B cell (primary cell): ENCODE measurements at regions of chr17 and their contacts with region 1.

Region 1: GRCh38 chr17:41786227-41787020 is at the start of gene JUP:
- DNase-seq: peak; percentile 97
- ATAC-seq: peak; percentile 90
- H3K4me3 ChIP-seq: peak within 1 kb of the TSS; percentile 53 to 76 (median 68)
- H3K4me3 Mint-ChIP-seq: peak within 1 kb of the TSS; percentile 88
- H3K27ac ChIP-seq: peak within 1 kb of the TSS; percentile 64 to 72
- H3K27ac Mint-ChIP-seq: peak within 1 kb of the TSS; percentile 86
- H3K4me1 ChIP-seq: peaks cover 33 to 52% of the 10 kb centered on the region in 2 donors
- H3K4me1 Mint-ChIP-seq: peaks cover 45% of the 10 kb centered on the region
- H3K27me3 ChIP-seq: no peaks in the 10 kb centered on the region
- H3K27me3 Mint-ChIP-seq: no peaks in the 10 kb centered on the region
- CTCF ChIP-seq: peak; percentile 78
- total RNA-seq, gene JUP: 56.1 and 63.3 TPM in 2 replicates

Region 2: DNA sequence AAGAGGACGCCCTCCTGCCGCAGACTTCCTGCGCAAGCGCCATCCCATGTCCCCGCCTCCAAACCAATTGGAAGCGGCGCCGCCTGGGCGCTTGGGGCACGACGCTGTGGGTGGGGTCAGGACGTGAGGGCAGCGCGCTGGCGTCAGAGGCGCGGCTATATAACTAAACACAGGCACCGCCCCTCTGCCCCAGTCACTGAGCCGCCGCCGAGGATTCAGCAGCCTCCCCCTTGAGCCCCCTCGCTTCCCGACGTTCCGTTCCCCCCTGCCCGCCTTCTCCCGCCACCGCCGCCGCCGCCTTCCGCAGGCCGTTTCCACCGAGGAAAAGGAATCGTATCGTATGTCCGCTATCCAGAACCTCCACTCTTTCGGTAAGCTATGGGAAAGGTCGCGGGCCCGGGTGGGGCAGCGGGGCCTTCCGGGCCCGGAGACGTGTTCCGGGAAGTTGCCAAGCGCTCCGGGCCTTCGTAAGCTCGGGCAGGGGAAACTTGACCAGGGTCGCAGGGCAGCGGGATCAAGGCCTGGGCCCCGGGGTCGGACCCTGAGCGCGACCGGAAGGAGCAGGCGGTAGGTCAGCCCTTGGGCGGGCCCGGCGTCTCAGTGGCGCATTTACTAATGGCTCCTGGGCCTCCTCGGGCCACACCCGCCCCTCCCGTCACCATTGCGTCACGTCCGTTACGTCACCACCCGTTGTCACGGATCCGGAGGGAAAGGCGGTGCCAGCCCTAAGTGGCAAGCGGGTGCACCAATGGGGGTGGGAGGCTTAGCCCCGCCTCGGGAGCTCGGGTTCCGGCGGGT is 97.5 kb before region 1 on chr17 and contains the start of gene EIF1:
- CTCF ChIA-PET with region 1: interaction called, 6 read pairs
- POLR2A ChIA-PET with region 1: interaction called, 14 read pairs
- intact Hi-C with region 1: loop called (anchors 5 kb)
- DNase-seq: peak; percentile 100
- ATAC-seq: peak; percentile 75
- H3K4me3 ChIP-seq: peak within 1 kb of the TSS; percentile 81 to 99 (median 87)
- H3K4me3 Mint-ChIP-seq: peak within 1 kb of the TSS; percentile 96
- H3K27ac ChIP-seq: peak within 1 kb of the TSS; percentile 99
- H3K27ac Mint-ChIP-seq: peak within 1 kb of the TSS; percentile 100
- H3K4me1 ChIP-seq: peaks cover 22 to 27% of the 10 kb centered on the region in 2 donors
- H3K4me1 Mint-ChIP-seq: peaks cover 38% of the 10 kb centered on the region
- H3K27me3 ChIP-seq: no peaks in the 10 kb centered on the region
- H3K27me3 Mint-ChIP-seq: no peaks in the 10 kb centered on the region
- CTCF ChIP-seq: no peak
- total RNA-seq, gene EIF1: 753 and 773 TPM in 2 replicates

Region 3: DNA sequence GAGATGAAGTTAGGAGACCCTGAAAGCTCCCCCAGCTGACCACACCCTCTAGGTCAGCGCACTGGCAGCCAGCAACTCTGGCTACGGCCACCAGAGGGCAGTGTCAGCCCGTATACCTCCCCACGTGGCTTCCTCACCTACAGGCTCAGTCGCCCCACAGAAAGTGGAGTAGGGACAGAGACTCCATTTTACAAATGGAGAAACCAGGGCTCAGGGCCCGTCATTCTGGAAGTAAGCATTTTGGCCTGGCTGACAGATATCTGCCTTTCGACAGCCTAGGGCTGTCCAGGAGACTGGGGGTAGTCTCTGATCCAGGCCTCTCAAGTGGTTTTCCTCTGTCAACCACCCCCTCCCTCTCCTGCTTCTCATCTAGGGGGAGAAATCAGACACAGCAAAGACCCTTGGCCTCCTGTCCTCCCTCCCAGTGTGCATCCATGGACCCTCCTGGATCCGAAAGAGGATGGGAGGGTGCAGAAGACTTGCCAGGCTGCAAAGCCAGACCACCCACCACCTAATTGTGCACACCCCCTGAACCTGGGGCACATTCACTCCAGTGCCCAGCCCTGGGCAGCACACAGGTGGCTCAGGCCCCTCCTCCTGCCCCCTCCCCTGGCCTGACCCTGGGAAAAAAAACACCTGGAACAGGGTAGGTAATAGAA is 48.2 kb before region 1 on chr17:
- CTCF ChIA-PET with region 1: interaction called, 15 read pairs
- POLR2A ChIA-PET with region 1: interaction called, 3 read pairs
- intact Hi-C with region 1: loop called (anchors 5 kb)
- DNase-seq: peak; percentile 88
- ATAC-seq: peak; percentile 90
- H3K4me3 ChIP-seq: no peak overlapping the region
- H3K4me3 Mint-ChIP-seq: no peak overlapping the region
- H3K27ac ChIP-seq: no peak overlapping the region
- H3K27ac Mint-ChIP-seq: no peak overlapping the region
- H3K4me1 ChIP-seq: peaks cover 23 to 25% of the 10 kb centered on the region in 2 donors
- H3K4me1 Mint-ChIP-seq: peaks cover 11% of the 10 kb centered on the region
- H3K27me3 ChIP-seq: peaks cover 0 to 42% (median 27%) of the 10 kb centered on the region in 4 experiments
- H3K27me3 Mint-ChIP-seq: peaks cover 28% of the 10 kb centered on the region
- CTCF ChIP-seq: peak; percentile 99

Region 4: DNA sequence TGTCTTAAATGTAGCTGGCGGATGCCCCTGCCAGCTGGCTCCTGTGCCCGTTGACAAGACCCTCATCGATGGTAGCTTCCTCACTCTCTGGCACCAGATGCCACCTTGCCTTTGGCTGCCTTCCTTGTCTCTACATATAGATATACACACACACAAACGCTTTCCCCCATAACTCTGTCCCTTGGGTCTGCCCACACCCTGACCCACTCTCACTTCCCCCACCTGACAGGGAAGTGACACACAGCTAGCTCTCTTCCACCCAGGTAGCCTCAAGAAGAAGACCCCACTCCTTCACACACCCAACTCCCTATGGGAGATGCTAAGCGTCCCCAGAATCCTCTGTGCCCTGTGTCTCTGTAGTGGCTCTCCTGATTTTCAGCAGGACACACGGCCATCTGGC is 25.5 kb before region 1 on chr17:
- CTCF ChIA-PET with region 1: interaction called, 10 read pairs
- POLR2A ChIA-PET with region 1: no interaction called
- intact Hi-C with region 1: no loop called
- DNase-seq: peak; percentile 64
- ATAC-seq: peak; percentile 88
- H3K4me3 ChIP-seq: no peak overlapping the region
- H3K4me3 Mint-ChIP-seq: peak overlapping the region; percentile 18
- H3K27ac ChIP-seq: peak overlapping the region in 1 of 2 donors; percentile 47
- H3K27ac Mint-ChIP-seq: peak overlapping the region; percentile 82
- H3K4me1 ChIP-seq: peaks cover 4 to 16% of the 10 kb centered on the region in 2 donors
- H3K4me1 Mint-ChIP-seq: peaks cover 18% of the 10 kb centered on the region
- H3K27me3 ChIP-seq: no peaks in the 10 kb centered on the region
- H3K27me3 Mint-ChIP-seq: no peaks in the 10 kb centered on the region
- CTCF ChIP-seq: no peak

Region 5: GRCh38 chr17:41801374-41802271 is 15.2 kb after region 1 on chr17:
- CTCF ChIA-PET with region 1: interaction called, 63 read pairs
- POLR2A ChIA-PET with region 1: interaction called, 13 read pairs
- intact Hi-C with region 1: loop called (anchors 1 kb)
- DNase-seq: peak; percentile 84
- ATAC-seq: peak; percentile 86
- H3K4me3 ChIP-seq: no peak overlapping the region
- H3K4me3 Mint-ChIP-seq: no peak overlapping the region
- H3K27ac ChIP-seq: no peak overlapping the region
- H3K27ac Mint-ChIP-seq: peak overlapping the region; percentile 5
- H3K4me1 ChIP-seq: peaks cover 7 to 22% of the 10 kb centered on the region in 2 donors
- H3K4me1 Mint-ChIP-seq: peaks cover 16% of the 10 kb centered on the region
- H3K27me3 ChIP-seq: no peaks in the 10 kb centered on the region
- H3K27me3 Mint-ChIP-seq: no peaks in the 10 kb centered on the region
- CTCF ChIP-seq: peak; percentile 99

Region 6: GRCh38 chr17:41811549-41812380 is 25.3 kb after region 1 on chr17 and contains the start of gene P3H4:
- CTCF ChIA-PET with region 1: interaction called, 25 read pairs
- POLR2A ChIA-PET with region 1: no interaction called
- intact Hi-C with region 1: loop called (anchors 1 kb)
- DNase-seq: peak; percentile 88
- ATAC-seq: peak; percentile 91
- H3K4me3 ChIP-seq: peak within 1 kb of the TSS; percentile 23 to 85 (median 60)
- H3K4me3 Mint-ChIP-seq: peak within 1 kb of the TSS; percentile 96
- H3K27ac ChIP-seq: no peak within 1 kb of the TSS
- H3K27ac Mint-ChIP-seq: peak within 1 kb of the TSS; percentile 83
- H3K4me1 ChIP-seq: peaks cover 20% of the 10 kb centered on the region in 2 donors
- H3K4me1 Mint-ChIP-seq: peaks cover 19% of the 10 kb centered on the region
- H3K27me3 ChIP-seq: peaks cover 0 to 25% (median 5%) of the 10 kb centered on the region in 4 experiments
- H3K27me3 Mint-ChIP-seq: peaks cover 6% of the 10 kb centered on the region
- CTCF ChIP-seq: peak; percentile 82
- total RNA-seq, gene P3H4: 2.5 and 2.8 TPM in 2 replicates

Region 7: GRCh38 chr17:41918314-41919164 is 132.1 kb after region 1 on chr17 and contains the start of gene ACLY:
- CTCF ChIA-PET with region 1: no interaction called
- POLR2A ChIA-PET with region 1: no interaction called
- intact Hi-C with region 1: loop called (anchors 5 kb)
- DNase-seq: peak; percentile 95
- ATAC-seq: peak; percentile 99
- H3K4me3 ChIP-seq: peak within 1 kb of the TSS; percentile 78 to 99 (median 98)
- H3K4me3 Mint-ChIP-seq: peak within 1 kb of the TSS; percentile 91
- H3K27ac ChIP-seq: peak within 1 kb of the TSS; percentile 62 to 81
- H3K27ac Mint-ChIP-seq: peak within 1 kb of the TSS; percentile 89
- H3K4me1 ChIP-seq: peaks cover 15 to 21% of the 10 kb centered on the region in 2 donors
- H3K4me1 Mint-ChIP-seq: peaks cover 40% of the 10 kb centered on the region
- H3K27me3 ChIP-seq: no peaks in the 10 kb centered on the region
- H3K27me3 Mint-ChIP-seq: no peaks in the 10 kb centered on the region
- CTCF ChIP-seq: no peak
- total RNA-seq, gene ACLY: 85.3 and 91.5 TPM in 2 replicates